B cell (primary cell): ENCODE measurements at regions of chr17 and their contacts with region 1.

Region 1: DNA sequence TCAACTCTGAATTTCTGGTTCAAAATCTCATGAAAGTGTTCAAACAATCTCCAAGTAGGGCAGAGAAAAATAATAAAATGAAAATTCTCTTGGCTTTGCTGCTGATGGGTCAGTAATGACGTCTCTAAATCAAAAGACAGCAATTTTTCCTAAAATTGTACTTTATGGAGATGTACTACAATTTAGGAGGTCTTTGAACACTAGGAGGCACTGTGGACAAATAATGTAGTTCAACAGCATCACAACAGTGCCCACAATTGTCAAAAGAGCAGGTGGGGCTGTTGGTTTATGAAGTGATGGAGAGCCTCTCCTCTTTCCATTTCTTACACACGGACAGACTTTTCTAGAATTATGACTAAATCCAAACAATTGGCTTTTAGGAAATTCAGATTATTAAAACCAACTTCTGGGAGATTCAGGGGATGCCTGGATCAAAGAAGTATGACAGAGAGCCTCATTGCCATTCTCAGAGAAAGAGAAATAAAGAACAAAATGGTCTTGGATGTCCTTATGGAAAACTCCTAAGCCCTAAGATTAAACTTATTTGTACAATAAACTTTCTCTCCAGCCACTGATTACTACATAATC is 23.8 kb downstream of the EZH1 start:
- DNase-seq: peak; percentile 78
- ATAC-seq: peak; percentile 82
- H3K4me3 ChIP-seq: no peak overlapping the region
- H3K4me3 Mint-ChIP-seq: no peak overlapping the region
- H3K27ac ChIP-seq: no peak overlapping the region
- H3K27ac Mint-ChIP-seq: peak overlapping the region; percentile 21
- H3K4me1 ChIP-seq: no peaks in the 10 kb centered on the region
- H3K4me1 Mint-ChIP-seq: peaks cover 3% of the 10 kb centered on the region
- H3K27me3 ChIP-seq: no peaks in the 10 kb centered on the region
- H3K27me3 Mint-ChIP-seq: no peaks in the 10 kb centered on the region
- CTCF ChIP-seq: peak; percentile 80

Region 2: DNA sequence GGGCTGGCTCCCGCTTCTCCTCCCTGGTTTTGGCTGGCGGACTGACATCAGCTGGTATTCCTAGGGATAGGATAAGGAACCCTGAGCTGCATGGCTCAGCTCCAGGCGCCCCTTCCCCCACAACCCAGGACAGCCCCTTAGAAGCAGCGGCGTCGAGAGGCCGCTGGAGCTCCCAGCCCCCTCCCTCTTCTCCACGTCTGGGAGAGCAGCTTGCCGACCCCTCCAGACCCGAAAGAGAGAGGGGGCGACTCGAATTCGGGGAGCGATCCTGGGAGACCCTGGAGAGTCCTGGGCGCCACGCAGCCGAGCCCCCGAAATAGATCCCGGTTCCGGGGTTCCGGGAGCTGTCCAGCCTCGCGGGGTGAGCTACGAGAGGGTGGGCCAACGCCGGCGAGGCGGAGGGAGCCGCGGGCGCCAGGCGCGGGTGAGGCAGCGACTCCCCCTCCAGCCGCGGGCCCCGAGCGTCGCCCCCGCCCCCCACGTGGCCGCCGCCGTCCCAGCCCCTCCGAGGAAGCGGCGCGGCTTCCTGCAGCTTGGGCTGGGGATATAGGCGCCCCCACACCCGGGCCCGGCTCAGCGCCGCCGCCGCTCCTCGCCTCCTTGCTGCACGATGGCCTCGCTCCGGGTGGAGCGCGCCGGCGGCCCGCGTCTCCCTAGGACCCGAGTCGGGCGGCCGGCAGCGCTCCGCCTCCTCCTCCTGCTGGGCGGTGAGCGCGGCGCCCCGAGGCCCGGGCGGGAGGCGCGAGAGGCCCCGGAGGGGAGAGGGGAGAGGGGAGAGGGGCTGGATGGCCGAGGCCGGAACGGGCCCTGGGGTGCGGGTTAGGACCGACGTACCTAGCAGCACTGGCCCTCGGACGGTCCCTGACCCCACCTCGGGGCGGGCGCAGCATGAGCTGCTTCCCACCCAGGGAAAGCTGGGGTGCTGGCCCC is 39.8 kb after region 1 on chr17 and contains the start of gene RAMP2:
- CTCF ChIA-PET with region 1: interaction called, 18 read pairs
- POLR2A ChIA-PET with region 1: no interaction called
- intact Hi-C with region 1: no loop called
- DNase-seq: peak; percentile 45
- ATAC-seq: peak; percentile 32
- H3K4me3 ChIP-seq: peak within 1 kb of the TSS in 4 of 5 experiments; percentile 13 to 54 (median 39)
- H3K4me3 Mint-ChIP-seq: peak within 1 kb of the TSS; percentile 85
- H3K27ac ChIP-seq: no peak within 1 kb of the TSS
- H3K27ac Mint-ChIP-seq: peak within 1 kb of the TSS; percentile 37
- H3K4me1 ChIP-seq: peaks cover 19 to 23% of the 10 kb centered on the region in 2 donors
- H3K4me1 Mint-ChIP-seq: peaks cover 23% of the 10 kb centered on the region
- H3K27me3 ChIP-seq: peaks cover 0 to 48% (median 18%) of the 10 kb centered on the region in 4 experiments
- H3K27me3 Mint-ChIP-seq: peaks cover 50% of the 10 kb centered on the region
- CTCF ChIP-seq: no peak
- total RNA-seq, gene RAMP2: not detected in 2 replicates

Region 3: DNA sequence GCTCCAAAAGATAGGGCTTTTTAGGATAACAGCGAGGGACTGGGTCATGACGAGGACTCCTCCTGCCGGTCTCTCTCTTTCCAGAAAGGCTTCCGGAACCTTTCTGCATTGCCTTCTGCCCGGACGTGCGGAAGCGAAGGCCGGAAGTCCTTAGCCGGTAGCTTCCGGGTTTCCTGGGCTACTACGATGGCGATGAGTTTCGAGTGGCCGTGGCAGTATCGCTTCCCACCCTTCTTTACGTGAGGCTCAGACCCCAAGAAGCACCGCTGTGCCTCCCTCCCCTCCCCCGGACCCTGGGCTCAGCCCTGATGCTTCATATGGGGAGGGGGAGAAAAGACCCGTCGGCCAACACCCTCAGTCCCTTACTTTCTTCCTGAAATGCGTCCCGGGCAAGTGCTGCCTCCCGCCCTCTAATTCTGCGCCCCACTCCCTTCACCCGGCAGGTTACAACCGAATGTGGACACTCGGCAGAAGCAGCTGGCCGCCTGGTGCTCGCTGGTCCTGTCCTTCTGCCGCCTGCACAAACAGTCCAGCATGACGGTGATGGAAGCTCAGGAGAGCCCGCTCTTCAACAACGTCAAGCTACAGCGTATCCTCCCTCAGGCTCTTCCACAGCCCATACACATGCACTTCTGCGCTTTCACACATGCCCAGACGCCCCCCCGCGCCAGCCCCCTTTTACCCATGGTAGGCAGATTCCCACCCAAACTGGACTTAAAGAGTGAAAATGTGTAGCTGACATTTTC is 52.4 kb after region 1 on chr17 and contains the start of gene VPS25:
- CTCF ChIA-PET with region 1: interaction called, 5 read pairs
- POLR2A ChIA-PET with region 1: interaction called, 11 read pairs
- intact Hi-C with region 1: no loop called
- DNase-seq: peak; percentile 87
- ATAC-seq: peak; percentile 89
- H3K4me3 ChIP-seq: peak within 1 kb of the TSS; percentile 71 to 88 (median 82)
- H3K4me3 Mint-ChIP-seq: peak within 1 kb of the TSS; percentile 99
- H3K27ac ChIP-seq: peak within 1 kb of the TSS; percentile 81 to 85
- H3K27ac Mint-ChIP-seq: peak within 1 kb of the TSS; percentile 98
- H3K4me1 ChIP-seq: peaks cover 16 to 17% of the 10 kb centered on the region in 2 donors
- H3K4me1 Mint-ChIP-seq: peaks cover 23% of the 10 kb centered on the region
- H3K27me3 ChIP-seq: no peaks in the 10 kb centered on the region
- H3K27me3 Mint-ChIP-seq: no peaks in the 10 kb centered on the region
- CTCF ChIP-seq: no peak
- total RNA-seq, gene VPS25: 38.7 and 38.8 TPM in 2 replicates

Region 4: GRCh38 chr17:42928714-42929496 is 207.8 kb after region 1 on chr17:
- CTCF ChIA-PET with region 1: interaction called, 5 read pairs
- POLR2A ChIA-PET with region 1: no interaction called
- intact Hi-C with region 1: loop called (anchors 1 kb)
- DNase-seq: peak; percentile 50
- ATAC-seq: peak; percentile 78
- H3K4me3 ChIP-seq: no peak overlapping the region
- H3K4me3 Mint-ChIP-seq: no peak overlapping the region
- H3K27ac ChIP-seq: no peak overlapping the region
- H3K27ac Mint-ChIP-seq: peak overlapping the region; percentile 47
- H3K4me1 ChIP-seq: peaks cover 8 to 10% of the 10 kb centered on the region in 2 donors
- H3K4me1 Mint-ChIP-seq: peaks cover 9% of the 10 kb centered on the region
- H3K27me3 ChIP-seq: no peaks in the 10 kb centered on the region
- H3K27me3 Mint-ChIP-seq: no peaks in the 10 kb centered on the region
- CTCF ChIP-seq: peak; percentile 66

Region 5: DNA sequence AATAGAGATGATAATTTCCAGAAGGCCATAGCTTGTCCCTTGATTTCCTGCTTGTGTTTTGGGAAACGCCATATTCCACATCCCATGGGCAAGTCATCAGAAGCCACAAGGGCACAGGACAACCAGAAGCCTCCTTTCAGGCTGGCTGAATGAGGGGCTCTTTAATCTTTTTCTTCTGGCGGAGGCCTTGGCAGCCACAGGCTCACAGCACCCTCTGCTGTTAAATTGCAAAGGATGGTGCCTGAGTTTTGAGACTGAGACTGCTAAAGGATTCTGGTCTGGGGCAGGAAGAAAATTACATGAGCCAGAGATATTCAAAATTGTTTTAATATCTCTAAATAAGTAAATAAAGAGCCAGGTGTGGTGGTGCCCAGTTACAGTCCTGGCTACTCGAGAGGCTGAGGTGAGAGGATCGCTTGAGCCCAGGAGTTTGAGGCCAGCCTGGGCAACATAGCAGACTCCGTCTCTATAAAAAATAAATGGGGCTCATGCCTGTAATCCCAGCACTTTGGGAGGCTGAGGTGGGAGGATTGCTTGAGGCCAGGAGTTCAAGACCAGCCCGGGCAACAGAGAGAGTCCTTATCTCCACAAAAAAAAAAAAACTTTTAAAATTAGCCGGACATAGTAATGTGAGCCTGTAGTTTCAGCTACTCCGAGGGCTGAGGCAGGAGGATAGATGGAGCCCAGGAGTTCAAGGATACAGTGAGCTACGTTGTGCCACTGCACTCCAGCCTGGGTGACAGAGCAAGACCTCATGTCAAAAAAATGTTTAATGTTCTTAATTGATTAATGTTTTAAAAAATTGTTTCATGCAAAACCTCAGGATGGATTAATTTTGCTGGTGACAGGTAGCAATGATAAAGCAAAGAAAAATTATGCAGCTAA is 216.9 kb after region 1 on chr17:
- CTCF ChIA-PET with region 1: interaction called, 5 read pairs
- POLR2A ChIA-PET with region 1: no interaction called
- intact Hi-C with region 1: loop called (anchors 2 kb)
- DNase-seq: peak; percentile 48
- ATAC-seq: peak; percentile 45
- H3K4me3 ChIP-seq: no peak overlapping the region
- H3K4me3 Mint-ChIP-seq: no peak overlapping the region
- H3K27ac ChIP-seq: no peak overlapping the region
- H3K27ac Mint-ChIP-seq: no peak overlapping the region
- H3K4me1 ChIP-seq: no peaks in the 10 kb centered on the region
- H3K4me1 Mint-ChIP-seq: no peaks in the 10 kb centered on the region
- H3K27me3 ChIP-seq: peaks cover 0 to 6% (median 1%) of the 10 kb centered on the region in 4 experiments
- H3K27me3 Mint-ChIP-seq: no peaks in the 10 kb centered on the region
- CTCF ChIP-seq: peak; percentile 54